ENCODE measurements at regions of chr21 and their contacts with region 1.

Region 1: DNA sequence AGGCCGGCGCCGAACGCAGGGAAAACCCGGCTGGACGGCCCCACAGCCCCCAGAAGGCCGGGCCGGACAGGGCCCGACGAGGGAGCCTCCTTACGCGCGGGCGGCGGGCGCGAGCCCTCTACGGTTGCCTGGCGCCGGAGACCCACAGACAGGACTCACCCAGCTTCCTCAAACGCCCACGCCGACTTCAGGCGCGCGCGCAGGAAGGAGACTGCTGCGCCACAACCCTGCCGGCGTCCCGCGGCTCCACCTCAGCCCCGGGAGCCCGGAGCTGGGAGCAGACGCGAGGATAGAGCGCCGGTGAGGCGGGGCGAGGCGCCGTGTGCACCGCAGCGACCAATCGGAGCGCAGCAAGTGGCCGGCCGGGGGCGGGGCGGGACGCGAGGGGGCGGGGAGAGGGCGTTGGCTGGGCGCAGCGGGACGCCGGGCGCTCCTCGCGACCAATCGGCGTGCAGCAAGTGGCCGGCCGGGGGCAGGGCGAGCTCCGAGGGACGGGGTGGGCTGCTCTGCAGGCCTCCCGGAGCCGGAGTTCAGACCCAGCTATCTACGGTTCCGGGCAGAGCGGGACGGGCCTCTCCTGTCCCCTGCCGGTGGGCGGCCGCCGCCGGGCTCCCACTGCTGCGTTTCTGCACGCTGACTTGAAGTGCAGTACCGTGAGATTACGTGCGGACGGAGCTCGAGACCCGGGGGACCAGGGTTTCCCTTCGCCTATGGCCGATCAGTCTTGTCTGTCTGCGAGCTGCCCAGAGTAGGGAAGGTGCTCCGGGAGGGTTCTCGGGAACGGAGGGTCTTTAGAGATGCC is at the start of gene TMEM50B:
- DNase-seq: peak; percentile 99
- H3K4me3 Mint-ChIP-seq: peak within 1 kb of the TSS; percentile 92
- H3K27ac Mint-ChIP-seq: peak within 1 kb of the TSS; percentile 79
- H3K4me1 Mint-ChIP-seq: peaks cover 19% of the 10 kb centered on the region
- H3K27me3 Mint-ChIP-seq: no peaks in the 10 kb centered on the region
- total RNA-seq, gene TMEM50B: 18.6 to 21.8 TPM

Region 2: DNA sequence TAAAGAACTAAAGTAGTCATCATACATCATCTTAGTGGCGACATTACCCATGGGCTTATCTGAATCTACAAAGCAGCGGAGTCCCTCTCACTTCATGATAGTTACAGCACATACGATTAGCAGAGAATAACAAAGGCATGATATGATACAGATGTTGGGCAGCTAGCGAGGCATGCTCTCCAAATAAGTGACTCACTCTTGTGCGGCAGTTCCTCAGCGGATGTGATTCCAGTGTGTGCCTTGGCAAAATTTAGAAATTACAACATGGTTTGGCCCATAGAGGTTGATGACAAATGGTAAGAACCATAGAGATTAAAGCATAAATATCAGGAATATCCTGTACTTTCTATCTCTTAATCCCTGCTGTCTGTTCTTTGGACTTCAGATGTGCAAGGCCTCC is 660.2 kb before region 1 on chr21:
- CTCF ChIA-PET with region 1: no interaction called
- POLR2A ChIA-PET with region 1: no interaction called
- intact Hi-C with region 1: no loop called
- DNase-seq: no peak
- H3K4me3 Mint-ChIP-seq: no peak overlapping the region
- H3K27ac Mint-ChIP-seq: no peak overlapping the region
- H3K4me1 Mint-ChIP-seq: no peaks in the 10 kb centered on the region
- H3K27me3 Mint-ChIP-seq: no peaks in the 10 kb centered on the region

Region 3: DNA sequence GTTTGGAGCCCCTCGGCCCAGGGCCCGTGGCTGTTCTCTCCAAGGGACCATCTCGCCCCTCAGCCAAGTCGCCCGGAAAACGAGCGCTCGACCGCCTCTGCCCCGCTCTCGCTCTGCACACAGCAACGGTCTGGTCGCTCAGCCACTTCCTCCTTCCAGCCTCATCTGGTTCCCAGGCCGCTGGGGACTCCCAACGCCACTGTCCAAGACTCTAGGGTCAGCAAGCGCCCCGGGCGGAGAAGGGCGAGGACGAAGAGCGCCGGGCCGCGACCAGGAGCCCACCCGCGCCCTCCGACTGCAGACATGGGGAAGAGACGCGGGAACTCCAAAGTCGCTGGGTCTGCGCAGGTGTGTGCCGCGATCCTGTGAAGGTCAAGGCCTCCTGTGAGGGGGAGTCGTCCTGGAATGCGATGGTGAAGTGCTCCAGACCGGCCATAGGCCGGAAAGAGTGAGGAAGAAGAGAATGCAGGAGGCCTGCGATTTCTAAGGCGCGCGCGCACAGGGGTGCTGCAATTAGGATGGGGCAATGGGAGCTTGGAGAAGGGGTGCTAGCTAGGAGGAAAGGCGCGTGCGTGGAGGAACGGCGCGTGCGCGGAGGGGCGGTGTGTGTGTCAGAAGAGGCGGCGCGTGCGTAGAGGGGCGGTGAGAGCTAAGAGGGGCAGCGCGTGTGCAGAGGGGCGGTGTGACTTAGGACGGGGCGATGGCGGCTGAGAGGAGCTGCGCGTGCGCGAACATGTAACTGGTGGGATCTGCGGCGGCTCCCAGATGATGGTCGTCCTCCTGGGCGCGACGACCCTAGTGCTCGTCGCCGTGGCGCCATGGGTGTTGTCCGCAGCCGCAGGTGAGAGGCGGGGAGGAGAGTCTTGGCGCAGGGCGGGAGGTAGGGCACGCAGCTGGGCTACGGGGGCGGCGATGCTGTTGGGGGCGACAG is 155.3 kb before region 1 on chr21 and contains the start of gene IFNAR1:
- CTCF ChIA-PET with region 1: no interaction called
- POLR2A ChIA-PET with region 1: interaction called, 7 read pairs
- intact Hi-C with region 1: loop called (anchors 1 kb)
- DNase-seq: peak; percentile 99
- H3K4me3 Mint-ChIP-seq: no peak within 1 kb of the TSS
- H3K27ac Mint-ChIP-seq: no peak within 1 kb of the TSS
- H3K4me1 Mint-ChIP-seq: peaks cover 26% of the 10 kb centered on the region
- H3K27me3 Mint-ChIP-seq: no peaks in the 10 kb centered on the region
- total RNA-seq, gene IFNAR1: 28.0 to 32.0 TPM

Region 4: DNA sequence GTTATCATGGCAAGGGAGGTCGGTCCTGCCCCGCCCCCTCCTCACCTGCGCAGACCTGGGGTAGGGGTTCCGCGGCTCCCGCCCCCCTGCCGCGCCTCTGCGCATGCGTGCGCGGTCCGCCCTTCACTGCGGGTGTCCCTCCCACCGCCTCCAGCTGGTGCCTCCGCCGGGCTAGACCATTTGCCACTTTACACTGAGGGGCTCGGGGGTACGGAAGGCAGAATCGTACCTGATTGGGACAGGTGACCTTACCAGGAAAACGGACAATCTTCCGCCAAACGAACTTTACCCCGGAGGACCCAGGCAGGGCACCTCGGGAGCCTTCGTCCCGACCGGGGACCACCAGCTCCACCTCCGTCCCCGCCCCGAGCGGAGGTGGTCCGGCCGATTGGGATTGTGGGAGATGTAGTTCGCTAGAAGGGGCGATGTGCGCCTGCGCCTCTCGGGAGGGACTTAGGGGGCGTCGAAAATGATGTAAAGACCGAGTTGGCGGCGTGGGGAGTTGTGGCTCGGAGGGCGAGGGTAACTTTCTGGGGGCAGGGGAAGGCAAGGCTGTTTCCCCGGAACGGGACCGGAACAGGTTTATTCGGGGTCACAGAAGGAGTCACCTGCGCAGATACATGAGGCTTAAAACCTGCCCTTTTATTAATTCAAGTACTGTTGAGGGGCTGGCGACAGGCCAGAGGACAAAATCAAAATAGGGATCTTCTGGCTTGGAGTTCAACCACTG is 11.7 kb after region 1 on chr21 and contains the start of gene DNAJC28:
- CTCF ChIA-PET with region 1: interaction called, 24 read pairs
- POLR2A ChIA-PET with region 1: interaction called, 37 read pairs
- intact Hi-C with region 1: loop called (anchors 1 kb)
- DNase-seq: peak; percentile 95
- H3K4me3 Mint-ChIP-seq: peak within 1 kb of the TSS; percentile 85
- H3K27ac Mint-ChIP-seq: peak within 1 kb of the TSS; percentile 81
- H3K4me1 Mint-ChIP-seq: peaks cover 9% of the 10 kb centered on the region
- H3K27me3 Mint-ChIP-seq: no peaks in the 10 kb centered on the region
- total RNA-seq, gene DNAJC28: 0.67 to 0.75 TPM

Region 5: GRCh38 chr21:33588485-33589335 is 108.8 kb after region 1 on chr21 and contains the start of gene DONSON:
- CTCF ChIA-PET with region 1: interaction called, 7 read pairs
- POLR2A ChIA-PET with region 1: interaction called, 15 read pairs
- intact Hi-C with region 1: loop called (anchors 5 kb)
- DNase-seq: peak; percentile 90
- H3K4me3 Mint-ChIP-seq: peak within 1 kb of the TSS; percentile 92
- H3K27ac Mint-ChIP-seq: peak within 1 kb of the TSS; percentile 72
- H3K4me1 Mint-ChIP-seq: peaks cover 21% of the 10 kb centered on the region
- H3K27me3 Mint-ChIP-seq: no peaks in the 10 kb centered on the region
- total RNA-seq, gene DONSON: 38.2 to 39.0 TPM

Region 6: DNA sequence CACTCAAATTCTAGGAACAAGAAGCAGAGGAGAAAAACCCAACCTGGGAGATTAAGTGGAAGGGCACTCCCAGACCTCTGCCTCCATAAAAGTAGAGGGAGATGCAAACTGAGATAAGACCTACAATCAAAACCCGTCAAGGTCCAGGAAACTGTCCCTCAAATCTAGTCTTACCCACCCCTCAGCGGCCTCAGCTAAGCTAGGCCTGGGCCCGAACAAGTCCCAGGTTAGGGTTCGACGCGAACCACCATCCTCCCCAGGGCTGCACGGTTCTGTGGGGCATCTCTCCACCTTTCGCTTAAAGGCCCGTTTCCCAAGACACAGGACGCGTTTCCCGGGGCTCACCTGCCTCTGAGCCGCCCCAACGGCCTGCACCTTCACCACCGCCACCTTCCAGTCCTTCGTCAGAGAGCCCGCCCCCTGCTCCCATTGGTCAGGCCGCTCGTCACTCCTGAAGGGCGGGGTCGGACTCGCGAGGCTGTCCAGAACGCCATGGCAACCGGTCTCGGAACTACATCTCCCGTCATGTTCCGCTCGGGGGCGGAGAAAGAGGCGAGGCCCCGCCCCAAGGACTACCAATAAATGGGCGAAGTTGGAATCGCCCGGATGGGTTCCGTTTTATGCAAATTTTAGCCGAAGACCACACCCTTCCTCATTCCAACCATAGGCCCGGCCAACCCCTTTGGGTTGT is 161.6 kb after region 1 on chr21 and contains the start of gene CRYZL1:
- CTCF ChIA-PET with region 1: no interaction called
- POLR2A ChIA-PET with region 1: no interaction called
- intact Hi-C with region 1: loop called (anchors 1 kb)
- DNase-seq: peak; percentile 100
- H3K4me3 Mint-ChIP-seq: peak within 1 kb of the TSS; percentile 86
- H3K27ac Mint-ChIP-seq: peak within 1 kb of the TSS; percentile 93
- H3K4me1 Mint-ChIP-seq: peaks cover 24% of the 10 kb centered on the region
- H3K27me3 Mint-ChIP-seq: peaks cover 16% of the 10 kb centered on the region
- total RNA-seq, gene CRYZL1: 32.8 to 34.9 TPM

Region 7: DNA sequence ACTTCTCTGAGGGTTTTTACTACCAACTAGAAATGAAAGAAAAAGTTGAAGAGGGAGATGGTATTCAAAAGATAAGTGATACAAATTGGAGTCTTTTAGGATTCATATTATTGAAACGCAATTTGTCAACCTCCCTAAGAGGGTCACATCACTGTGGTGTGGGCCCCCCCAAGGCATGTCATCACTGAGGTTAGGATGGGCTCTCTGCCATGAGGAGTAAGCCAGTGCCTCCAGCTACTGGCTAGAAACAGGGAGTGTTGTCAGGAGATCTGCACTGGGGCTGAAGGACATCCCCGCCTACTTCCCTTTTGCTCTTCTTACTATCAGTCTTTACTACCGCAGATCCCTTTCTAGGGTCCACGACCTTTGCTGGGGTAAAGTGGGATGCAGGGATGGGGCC is 188.3 kb after region 1 on chr21:
- CTCF ChIA-PET with region 1: no interaction called
- POLR2A ChIA-PET with region 1: no interaction called
- intact Hi-C with region 1: no loop called
- DNase-seq: no peak
- H3K4me3 Mint-ChIP-seq: no peak overlapping the region
- H3K27ac Mint-ChIP-seq: no peak overlapping the region
- H3K4me1 Mint-ChIP-seq: no peaks in the 10 kb centered on the region
- H3K27me3 Mint-ChIP-seq: peaks cover 2% of the 10 kb centered on the region